ENCODE measurements at regions of chr14 and their contacts with region 1.

Region 1: DNA sequence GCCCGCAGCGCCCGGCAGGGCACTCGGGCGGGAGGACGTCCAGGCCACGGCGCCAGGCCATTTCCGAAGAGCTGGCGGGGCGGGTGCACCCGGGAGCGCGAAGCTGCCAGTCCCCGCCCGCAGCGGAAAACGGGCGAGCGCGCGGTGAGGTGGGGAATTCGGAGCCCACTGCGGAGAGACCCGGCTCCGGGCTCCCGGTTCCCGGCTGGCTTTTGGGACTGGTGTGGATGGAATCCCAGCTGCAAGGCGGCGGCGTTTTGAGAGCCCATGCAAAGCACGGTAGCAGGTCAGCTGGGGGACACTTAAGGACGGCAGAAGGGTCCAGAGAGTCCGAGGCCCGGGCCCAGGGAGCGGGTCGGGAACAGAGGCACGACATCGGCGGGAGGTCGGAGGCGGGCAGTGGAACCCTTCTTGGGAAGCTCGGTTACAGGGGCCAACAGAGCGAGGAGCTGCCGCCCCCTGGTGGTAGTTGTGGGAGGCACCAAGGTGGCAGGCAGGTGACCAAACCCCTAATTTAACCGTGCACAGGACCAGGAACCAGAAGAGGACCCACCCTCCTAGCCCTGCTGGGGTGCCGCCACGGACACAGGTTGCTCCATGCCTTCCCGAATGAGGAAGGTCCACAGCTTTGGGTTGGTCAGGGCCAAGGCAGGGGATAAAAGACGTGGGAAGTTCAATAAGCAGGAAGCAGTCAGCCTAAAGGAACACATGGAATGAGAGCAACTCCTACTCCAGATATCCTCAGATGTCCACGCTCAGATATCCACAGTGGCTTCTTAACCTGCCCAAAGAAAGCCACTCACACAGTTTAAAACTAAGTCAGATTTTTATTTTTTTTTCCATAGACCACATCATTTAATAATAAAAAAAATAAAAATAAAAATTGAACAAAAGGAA is 685 bp upstream of the CDH24 start:
- DNase-seq: peak; percentile 70
- ATAC-seq: peak; percentile 83
- H3K4me3 ChIP-seq: peak overlapping the region; percentile 51 to 55
- H3K27ac ChIP-seq: peak overlapping the region; percentile 59; the same call in 1 of the 2 replicates
- H3K4me1 ChIP-seq: peaks cover 15% of the 10 kb centered on the region
- H3K27me3 ChIP-seq: no peaks in the 10 kb centered on the region
- CTCF ChIP-seq: peak; percentile 93

Region 2: GRCh38 chr14:22929848-22930364 is 128.1 kb before region 1 on chr14:
- CTCF ChIA-PET with region 1: no interaction called
- POLR2A ChIA-PET with region 1: no interaction called
- in situ Hi-C with region 1: no loop called
- intact Hi-C with region 1: loop called (anchors 5 kb)
- DNase-seq: no peak
- ATAC-seq: peak; percentile 9
- H3K4me3 ChIP-seq: peak overlapping the region; percentile 86 to 95
- H3K27ac ChIP-seq: peak overlapping the region; percentile 91
- H3K4me1 ChIP-seq: peaks cover 9% of the 10 kb centered on the region
- H3K27me3 ChIP-seq: no peaks in the 10 kb centered on the region
- CTCF ChIP-seq: no peak

Measured in Panc1 (cell line).